ENCODE measurements at regions of chr17 and their contacts with region 1.

Region 1: DNA sequence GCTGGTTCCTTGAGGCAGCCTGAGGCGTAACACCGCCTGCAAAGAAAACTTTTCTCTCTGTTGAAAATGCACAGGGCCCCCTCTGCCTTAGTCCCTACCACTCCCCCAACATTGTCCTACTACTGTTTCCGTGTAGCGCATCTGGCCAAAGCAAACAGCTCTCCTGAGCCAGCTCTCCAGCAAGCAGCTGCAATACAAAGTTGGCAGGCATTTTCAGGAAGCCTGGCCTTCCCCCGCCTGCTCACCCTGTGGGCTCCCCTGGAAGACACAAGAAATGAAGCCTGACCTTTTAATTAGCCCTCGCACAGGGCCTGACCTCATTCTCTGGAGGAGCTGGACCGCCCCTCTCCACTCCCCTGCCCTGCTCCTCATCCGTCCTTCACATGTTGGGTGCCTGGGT is 66.7 kb downstream of the SOX9 start:
- DNase-seq: no peak
- ATAC-seq: no peak
- H3K4me3 ChIP-seq: no peak overlapping the region
- H3K4me3 Mint-ChIP-seq: no peak overlapping the region
- H3K27ac ChIP-seq: no peak overlapping the region
- H3K27ac Mint-ChIP-seq: no peak overlapping the region
- H3K4me1 ChIP-seq: no peaks in the 10 kb centered on the region
- H3K4me1 Mint-ChIP-seq: no peaks in the 10 kb centered on the region
- H3K27me3 ChIP-seq: no peaks in the 10 kb centered on the region
- H3K27me3 Mint-ChIP-seq: no peaks in the 10 kb centered on the region
- CTCF ChIP-seq: no peak

Region 2: DNA sequence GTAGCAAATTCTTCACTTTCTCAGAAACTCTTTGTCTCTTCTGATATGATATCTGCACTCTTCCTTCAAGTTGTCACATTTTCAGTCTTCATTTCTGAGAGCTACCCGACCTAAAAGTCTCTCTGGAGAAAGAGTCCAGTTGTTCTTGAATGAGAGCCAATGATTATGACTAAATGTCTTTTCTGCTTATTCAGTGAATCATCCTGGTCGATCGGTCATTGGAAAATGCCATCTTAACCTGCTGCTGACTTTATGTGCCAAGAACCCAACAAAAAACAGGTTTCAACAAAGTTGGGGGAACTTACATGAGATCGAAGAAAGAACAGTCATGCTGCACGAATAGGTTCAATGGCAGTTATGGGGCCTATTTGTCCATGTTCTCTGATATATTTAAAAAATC is 50.9 kb before region 1 on chr17:
- intact Hi-C with region 1: loop called (anchors 10 kb)
- DNase-seq: no peak
- ATAC-seq: no peak
- H3K4me3 ChIP-seq: no peak overlapping the region
- H3K4me3 Mint-ChIP-seq: no peak overlapping the region
- H3K27ac ChIP-seq: no peak overlapping the region
- H3K27ac Mint-ChIP-seq: no peak overlapping the region
- H3K4me1 ChIP-seq: no peaks in the 10 kb centered on the region
- H3K4me1 Mint-ChIP-seq: no peaks in the 10 kb centered on the region
- H3K27me3 ChIP-seq: no peaks in the 10 kb centered on the region
- H3K27me3 Mint-ChIP-seq: peaks cover 0 to 4% of the 10 kb centered on the region in 2 donors
- CTCF ChIP-seq: no peak

Measured in natural killer cell (primary cell).